Vagina (tissue), 2 donors: ENCODE measurements at regions of chrX and their contacts with region 1.

Region 1: GRCh38 chrX:73863268-73863667 is 300.3 kb downstream of the CHIC1 start:
- DNase-seq: no peak
- H3K4me3 ChIP-seq: no peak overlapping the region
- H3K27ac ChIP-seq: no peak overlapping the region
- H3K4me1 ChIP-seq: no peaks in the 10 kb centered on the region
- H3K27me3 ChIP-seq: no peaks in the 10 kb centered on the region
- CTCF ChIP-seq: no peak
- POLR2A ChIP-seq: no peak

Region 2: GRCh38 chrX:74015379-74016019 is 152.2 kb after region 1 on chrX:
- intact Hi-C with region 1: loop called (anchors 5 kb)
- DNase-seq: no peak
- H3K4me3 ChIP-seq: no peak overlapping the region
- H3K27ac ChIP-seq: no peak overlapping the region
- H3K4me1 ChIP-seq: no peaks in the 10 kb centered on the region
- H3K27me3 ChIP-seq: no peaks in the 10 kb centered on the region
- CTCF ChIP-seq: peak; percentile 44 to 71 (median 61)
- POLR2A ChIP-seq: no peak

Region 3: DNA sequence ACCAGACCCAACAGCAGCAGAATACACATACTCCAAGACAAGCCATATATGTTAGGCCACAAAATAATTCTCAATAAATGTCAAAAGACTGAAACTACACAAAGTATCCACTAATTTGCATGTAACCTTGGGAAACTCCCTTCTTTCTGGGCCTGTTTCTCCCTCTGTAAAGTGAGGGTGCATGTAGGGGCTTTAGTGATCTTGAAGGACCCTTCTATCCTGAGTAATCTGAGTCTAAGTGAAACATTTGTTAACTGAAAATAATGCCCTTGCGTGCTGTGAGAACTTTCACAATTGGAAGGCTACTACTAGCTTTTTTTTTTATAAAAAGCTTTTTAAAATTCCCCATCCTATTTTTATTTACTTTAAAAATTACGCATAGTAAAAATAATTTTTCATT is 936.8 kb after region 1 on chrX:
- intact Hi-C with region 1: no loop called
- DNase-seq: no peak
- H3K4me3 ChIP-seq: no peak overlapping the region
- H3K27ac ChIP-seq: no peak overlapping the region
- H3K4me1 ChIP-seq: no peaks in the 10 kb centered on the region
- H3K27me3 ChIP-seq: no peaks in the 10 kb centered on the region
- CTCF ChIP-seq: no peak
- POLR2A ChIP-seq: no peak